ENCODE measurements at regions of chr10 and their contacts with region 1.

Region 1: GRCh38 chr10:119725828-119726675 is at the start of gene INPP5F:
- DNase-seq: peak; percentile 96 to 99 (median 96)
- H3K4me3 ChIP-seq: peak within 1 kb of the TSS; percentile 69 to 84 (median 83)
- H3K4me3 Mint-ChIP-seq: peak within 1 kb of the TSS; percentile 84 to 94
- H3K27ac ChIP-seq: peak within 1 kb of the TSS; percentile 90 to 92
- H3K27ac Mint-ChIP-seq: peak within 1 kb of the TSS; percentile 88 to 98 (median 95)
- H3K4me1 ChIP-seq: peaks cover 30 to 35% of the 10 kb centered on the region in 2 donors
- H3K4me1 Mint-ChIP-seq: peaks cover 38% of the 10 kb centered on the region
- H3K27me3 ChIP-seq: no peaks in the 10 kb centered on the region
- H3K27me3 Mint-ChIP-seq: peaks cover 0 to 3% (median 2%) of the 10 kb centered on the region in 3 donors
- CTCF ChIP-seq: peak; percentile 32
- polyA plus RNA-seq, gene INPP5F: 5.1 to 6.9 (median 5.4) TPM

Region 2: GRCh38 chr10:119693262-119693957 is 32.6 kb before region 1 on chr10:
- intact Hi-C with region 1: loop called in 1 of 2 experiments (anchors 2 kb)
- DNase-seq: no peak
- H3K4me3 ChIP-seq: no peak overlapping the region
- H3K4me3 Mint-ChIP-seq: no peak overlapping the region
- H3K27ac ChIP-seq: no peak overlapping the region
- H3K27ac Mint-ChIP-seq: no peak overlapping the region
- H3K4me1 ChIP-seq: no peaks in the 10 kb centered on the region
- H3K4me1 Mint-ChIP-seq: no peaks in the 10 kb centered on the region
- H3K27me3 ChIP-seq: no peaks in the 10 kb centered on the region
- H3K27me3 Mint-ChIP-seq: peaks cover 7 to 8% (median 7%) of the 10 kb centered on the region in 3 donors
- CTCF ChIP-seq: no peak

Region 3: DNA sequence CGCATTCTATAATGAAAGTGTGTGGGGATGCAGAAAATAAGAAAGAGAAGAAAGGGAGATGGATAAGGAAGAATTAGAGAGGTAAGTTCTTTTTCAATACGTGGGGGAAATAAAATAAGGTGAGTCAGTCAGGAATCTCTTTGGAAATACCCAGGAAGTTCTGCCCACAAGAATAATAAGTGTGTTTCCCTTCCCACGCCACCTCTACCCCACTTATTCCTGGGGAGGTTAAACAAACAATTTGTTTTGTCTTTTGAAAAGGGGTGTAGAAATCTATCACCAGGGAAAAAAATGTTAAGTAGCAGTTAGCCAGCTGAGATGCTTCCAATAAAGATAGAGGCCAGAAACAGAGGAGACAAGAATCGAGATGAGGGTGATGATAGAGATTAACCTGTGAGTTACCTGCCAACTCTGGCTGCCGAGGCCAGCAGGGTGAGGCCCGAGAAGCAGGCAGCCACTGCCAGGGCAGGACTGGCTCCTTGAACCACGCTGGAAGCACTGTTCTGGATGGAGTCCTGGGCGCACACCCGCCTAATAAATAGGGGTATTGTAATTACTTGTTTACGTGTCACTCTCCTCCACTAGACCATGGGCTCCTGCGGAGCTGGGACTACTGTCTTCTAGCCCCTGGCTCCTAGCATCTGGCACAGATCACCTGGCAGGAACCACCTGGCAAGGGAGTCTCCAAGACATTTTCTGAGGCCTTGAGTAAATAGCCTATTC is 1680.9 kb after region 1 on chr10:
- intact Hi-C with region 1: no loop called
- DNase-seq: no peak
- H3K4me3 ChIP-seq: no peak overlapping the region
- H3K4me3 Mint-ChIP-seq: no peak overlapping the region
- H3K27ac ChIP-seq: no peak overlapping the region
- H3K27ac Mint-ChIP-seq: no peak overlapping the region
- H3K4me1 ChIP-seq: no peaks in the 10 kb centered on the region
- H3K4me1 Mint-ChIP-seq: no peaks in the 10 kb centered on the region
- H3K27me3 ChIP-seq: no peaks in the 10 kb centered on the region
- H3K27me3 Mint-ChIP-seq: peaks cover 0 to 4% (median 0%) of the 10 kb centered on the region in 3 donors
- CTCF ChIP-seq: no peak